ENCODE measurements at regions of chr4 and their contacts with region 1.

Region 1: GRCh38 chr4:69689599-69689998 is 36.6 kb upstream of the UGT2A1 start:
- DNase-seq: no peak
- ATAC-seq: no peak
- H3K4me3 Mint-ChIP-seq: no peak overlapping the region
- H3K27ac Mint-ChIP-seq: no peak overlapping the region
- H3K4me1 Mint-ChIP-seq: no peaks in the 10 kb centered on the region
- H3K27me3 Mint-ChIP-seq: no peaks in the 10 kb centered on the region
- CTCF ChIP-seq: no peak

Region 2: DNA sequence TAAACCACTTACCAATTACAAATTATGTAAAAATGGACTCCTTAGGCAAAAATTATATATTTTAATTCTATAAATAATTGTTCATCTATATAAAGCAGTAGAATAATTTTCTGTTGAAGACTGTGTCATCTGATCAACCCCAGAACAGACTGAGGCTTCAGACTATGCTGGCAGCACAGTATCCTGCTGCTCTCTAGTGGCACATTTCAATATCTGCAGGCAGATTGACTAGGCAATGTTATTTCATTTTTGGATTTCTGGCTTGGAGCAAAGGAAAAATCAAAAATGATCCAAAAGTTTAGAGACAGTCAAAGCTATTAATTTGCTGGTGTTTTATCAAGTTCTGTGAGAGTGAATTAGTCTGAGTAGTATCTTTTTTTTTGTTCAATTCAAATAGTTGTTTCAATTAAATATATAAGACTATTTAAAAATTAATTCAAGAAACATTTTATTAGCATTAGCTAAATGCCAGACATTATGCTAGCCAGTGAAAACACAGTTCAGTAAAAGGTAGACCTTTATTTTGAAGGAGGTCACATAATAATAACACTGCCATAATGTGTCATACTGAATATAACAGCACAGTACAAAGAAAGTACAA is 191.7 kb after region 1 on chr4:
- CTCF ChIA-PET with region 1: no interaction called
- POLR2A ChIA-PET with region 1: no interaction called
- intact Hi-C with region 1: loop called (anchors 1 kb)
- DNase-seq: no peak
- ATAC-seq: no peak
- H3K4me3 Mint-ChIP-seq: no peak overlapping the region
- H3K27ac Mint-ChIP-seq: no peak overlapping the region
- H3K4me1 Mint-ChIP-seq: no peaks in the 10 kb centered on the region
- H3K27me3 Mint-ChIP-seq: no peaks in the 10 kb centered on the region
- CTCF ChIP-seq: no peak

Region 3: GRCh38 chr4:70183168-70183939 is 493.8 kb after region 1 on chr4:
- CTCF ChIA-PET with region 1: no interaction called
- POLR2A ChIA-PET with region 1: no interaction called
- intact Hi-C with region 1: loop called (anchors 10 kb)
- DNase-seq: no peak
- ATAC-seq: no peak
- H3K4me3 Mint-ChIP-seq: no peak overlapping the region
- H3K27ac Mint-ChIP-seq: no peak overlapping the region
- H3K4me1 Mint-ChIP-seq: no peaks in the 10 kb centered on the region
- H3K27me3 Mint-ChIP-seq: no peaks in the 10 kb centered on the region
- CTCF ChIP-seq: no peak

Region 4: DNA sequence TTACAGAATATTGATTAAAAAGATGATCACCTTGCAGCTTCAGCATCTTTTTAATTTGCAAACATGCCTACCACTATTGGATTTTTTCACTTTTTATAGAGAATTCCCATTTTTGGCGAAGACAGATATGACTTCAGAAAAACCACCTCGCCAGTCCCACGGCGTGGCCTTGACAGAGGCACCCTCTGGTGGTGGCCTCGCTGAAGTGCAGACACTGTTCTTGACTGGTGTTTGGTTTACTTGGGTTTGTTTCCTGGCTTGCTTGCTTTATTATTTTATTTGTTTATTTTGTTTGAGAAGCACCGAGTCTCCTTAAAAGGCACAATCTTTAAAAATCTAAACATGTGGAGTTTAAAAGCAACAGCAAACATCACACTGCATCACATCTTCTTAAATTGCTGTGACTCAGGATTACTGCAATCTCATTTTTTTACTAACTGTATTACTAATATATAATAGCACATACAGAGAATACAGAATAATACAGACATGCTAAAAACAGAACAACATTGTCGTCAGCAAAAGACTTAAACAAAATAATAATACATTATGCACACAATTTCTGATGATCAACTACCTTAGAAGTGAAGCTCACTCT is 815.7 kb after region 1 on chr4:
- CTCF ChIA-PET with region 1: interaction called, 5 read pairs
- POLR2A ChIA-PET with region 1: no interaction called
- intact Hi-C with region 1: loop called (anchors 1 kb)
- DNase-seq: peak; percentile 21
- ATAC-seq: peak; percentile 50
- H3K4me3 Mint-ChIP-seq: no peak overlapping the region
- H3K27ac Mint-ChIP-seq: no peak overlapping the region
- H3K4me1 Mint-ChIP-seq: no peaks in the 10 kb centered on the region
- H3K27me3 Mint-ChIP-seq: peaks cover under 1% of the 10 kb centered on the region
- CTCF ChIP-seq: no peak

Region 5: GRCh38 chr4:70559211-70559830 is 869.7 kb after region 1 on chr4:
- CTCF ChIA-PET with region 1: no interaction called
- POLR2A ChIA-PET with region 1: no interaction called
- intact Hi-C with region 1: loop called (anchors 1 kb)
- DNase-seq: no peak
- ATAC-seq: no peak
- H3K4me3 Mint-ChIP-seq: no peak overlapping the region
- H3K27ac Mint-ChIP-seq: no peak overlapping the region
- H3K4me1 Mint-ChIP-seq: peaks cover 9% of the 10 kb centered on the region
- H3K27me3 Mint-ChIP-seq: no peaks in the 10 kb centered on the region
- CTCF ChIP-seq: no peak